Aorta (tissue), 5 donors: ENCODE measurements at regions of chr6 and their contacts with region 1.

Region 1: GRCh38 chr6:26285143-26286134 is 79.6 kb upstream of the BTN3A2 start:
- DNase-seq: peak; percentile 97 to 98
- ATAC-seq: peak; percentile 97
- H3K4me3 ChIP-seq: peak overlapping the region; percentile 88 to 92
- H3K27ac ChIP-seq: peak overlapping the region; percentile 88 to 99
- H3K4me1 ChIP-seq: peaks cover 0 to 3% of the 10 kb centered on the region in 2 donors
- H3K27me3 ChIP-seq: no peaks in the 10 kb centered on the region

Region 2: DNA sequence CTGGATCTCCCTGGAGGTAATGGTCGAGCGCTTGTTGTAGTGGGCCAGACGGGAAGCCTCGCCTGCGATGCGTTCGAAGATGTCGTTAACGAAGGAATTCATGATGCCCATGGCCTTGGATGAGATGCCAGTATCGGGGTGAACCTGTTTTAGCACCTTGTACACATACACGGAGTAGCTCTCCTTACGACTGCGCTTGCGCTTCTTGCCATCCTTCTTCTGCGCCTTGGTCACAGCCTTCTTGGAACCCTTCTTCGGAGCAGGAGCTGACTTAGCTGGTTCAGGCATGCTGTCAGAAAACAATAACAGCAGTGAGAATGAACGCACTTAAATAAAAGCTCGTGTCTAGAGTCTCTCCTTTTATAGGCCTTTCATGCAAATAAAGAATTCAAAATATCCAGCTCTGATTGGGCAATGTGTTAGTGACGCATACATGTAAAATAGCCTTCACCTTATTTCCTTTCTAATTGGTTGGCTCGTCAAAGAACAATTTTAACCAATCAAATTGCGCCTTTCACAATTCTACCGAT is 69.0 kb before region 1 on chr6:
- intact Hi-C with region 1: no loop called
- DNase-seq: peak; percentile 80 to 82
- ATAC-seq: peak; percentile 92
- H3K4me3 ChIP-seq: peak overlapping the region; percentile 44 to 56
- H3K27ac ChIP-seq: peak overlapping the region; percentile 87 to 94
- H3K4me1 ChIP-seq: no peaks in the 10 kb centered on the region
- H3K27me3 ChIP-seq: no peaks in the 10 kb centered on the region

Region 3: DNA sequence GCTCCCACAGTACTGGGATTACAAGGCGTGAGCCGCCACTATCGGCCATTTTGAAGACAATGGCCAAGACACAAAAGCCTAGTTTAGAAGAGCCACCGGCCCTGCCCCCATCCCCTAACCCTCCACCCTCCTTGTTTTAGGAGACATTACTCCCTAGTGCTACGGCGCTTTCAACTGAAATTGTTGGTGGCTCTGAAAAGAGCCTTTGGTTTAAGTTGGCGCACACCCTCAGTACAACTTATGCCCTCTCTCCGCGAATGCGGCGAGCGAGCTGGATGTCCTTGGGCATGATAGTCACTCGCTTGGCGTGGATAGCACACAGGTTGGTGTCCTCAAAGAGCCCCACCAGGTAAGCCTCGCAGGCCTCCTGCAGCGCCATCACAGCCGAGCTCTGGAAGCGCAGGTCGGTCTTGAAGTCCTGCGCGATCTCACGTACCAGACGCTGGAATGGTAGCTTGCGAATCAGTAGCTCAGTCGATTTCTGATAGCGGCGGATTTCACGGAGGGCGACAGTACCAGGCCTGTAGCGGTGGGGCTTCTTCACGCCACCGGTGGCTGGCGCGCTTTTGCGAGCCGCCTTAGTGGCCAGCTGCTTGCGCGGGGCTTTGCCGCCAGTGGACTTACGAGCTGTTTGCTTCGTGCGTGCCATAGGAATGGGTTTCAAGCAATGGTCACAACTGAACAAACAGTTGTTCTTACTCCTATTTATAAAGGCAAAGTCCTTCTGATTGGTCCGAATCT is 35.3 kb before region 1 on chr6:
- intact Hi-C with region 1: loop called in 1 of 2 experiments (anchors 5 kb)
- DNase-seq: peak; percentile 75 to 78
- ATAC-seq: peak; percentile 70
- H3K4me3 ChIP-seq: peak overlapping the region; percentile 24 to 27
- H3K27ac ChIP-seq: no peak overlapping the region
- H3K4me1 ChIP-seq: no peaks in the 10 kb centered on the region
- H3K27me3 ChIP-seq: no peaks in the 10 kb centered on the region

Region 4: DNA sequence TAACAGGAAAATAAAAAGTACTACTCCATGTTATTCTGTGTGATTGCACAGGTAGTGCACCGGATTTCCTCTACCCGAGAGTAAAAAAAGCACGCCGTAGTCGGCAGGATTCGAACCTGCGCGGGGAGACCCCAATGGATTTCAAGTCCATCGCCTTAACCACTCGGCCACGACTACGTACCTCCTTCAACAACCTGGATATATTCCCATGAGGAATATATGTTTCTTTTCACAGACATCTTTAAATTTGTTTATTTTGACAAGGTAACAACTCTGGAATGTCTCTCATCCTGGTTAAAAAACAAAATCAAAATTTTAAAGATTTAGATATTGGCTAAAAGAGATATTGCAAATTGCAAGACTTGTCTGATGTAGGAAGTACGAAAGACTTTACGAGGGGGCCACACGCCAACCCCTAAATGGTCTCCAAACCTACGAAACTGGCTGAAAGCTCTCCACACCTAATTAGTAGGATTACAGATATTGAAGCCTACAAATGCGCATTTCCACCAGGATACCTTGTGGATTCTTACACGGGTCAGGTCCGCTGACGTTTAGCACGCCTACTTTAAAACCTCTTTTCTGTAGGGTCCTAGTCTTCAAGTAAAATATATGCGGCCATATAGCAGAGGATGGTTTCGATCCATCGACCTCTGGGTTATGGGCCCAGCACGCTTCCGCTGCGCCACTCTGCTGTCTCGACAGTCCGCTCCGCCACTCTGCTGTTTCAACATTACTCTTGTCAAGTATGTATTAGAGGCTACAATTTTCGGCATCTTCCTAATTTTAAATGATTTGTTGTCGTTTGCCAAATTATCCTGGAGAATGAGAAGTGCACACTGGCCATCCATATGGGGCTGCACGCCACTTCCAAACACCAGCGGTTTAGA is 27.3 kb after region 1 on chr6:
- intact Hi-C with region 1: loop called in 1 of 2 experiments (anchors 2 kb)
- DNase-seq: peak; percentile 73 to 87
- ATAC-seq: peak; percentile 87
- H3K4me3 ChIP-seq: peak overlapping the region; percentile 41 to 84
- H3K27ac ChIP-seq: no peak overlapping the region
- H3K4me1 ChIP-seq: no peaks in the 10 kb centered on the region
- H3K27me3 ChIP-seq: no peaks in the 10 kb centered on the region